Prostate gland (tissue), 2 donors: ENCODE measurements at regions of chr4 and their contacts with region 1.

Region 1: GRCh38 chr4:70504733-70505132 is 13.6 kb upstream of the AMTN start:
- DNase-seq: no peak
- H3K4me3 ChIP-seq: no peak overlapping the region
- H3K27ac ChIP-seq: no peak overlapping the region
- H3K4me1 ChIP-seq: no peaks in the 10 kb centered on the region
- H3K27me3 ChIP-seq: no peaks in the 10 kb centered on the region
- CTCF ChIP-seq: no peak
- POLR2A ChIP-seq: no peak

Region 2: DNA sequence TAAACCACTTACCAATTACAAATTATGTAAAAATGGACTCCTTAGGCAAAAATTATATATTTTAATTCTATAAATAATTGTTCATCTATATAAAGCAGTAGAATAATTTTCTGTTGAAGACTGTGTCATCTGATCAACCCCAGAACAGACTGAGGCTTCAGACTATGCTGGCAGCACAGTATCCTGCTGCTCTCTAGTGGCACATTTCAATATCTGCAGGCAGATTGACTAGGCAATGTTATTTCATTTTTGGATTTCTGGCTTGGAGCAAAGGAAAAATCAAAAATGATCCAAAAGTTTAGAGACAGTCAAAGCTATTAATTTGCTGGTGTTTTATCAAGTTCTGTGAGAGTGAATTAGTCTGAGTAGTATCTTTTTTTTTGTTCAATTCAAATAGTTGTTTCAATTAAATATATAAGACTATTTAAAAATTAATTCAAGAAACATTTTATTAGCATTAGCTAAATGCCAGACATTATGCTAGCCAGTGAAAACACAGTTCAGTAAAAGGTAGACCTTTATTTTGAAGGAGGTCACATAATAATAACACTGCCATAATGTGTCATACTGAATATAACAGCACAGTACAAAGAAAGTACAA is 623.5 kb before region 1 on chr4:
- intact Hi-C with region 1: loop called (anchors 5 kb)
- DNase-seq: peak; percentile 23
- H3K4me3 ChIP-seq: no peak overlapping the region
- H3K27ac ChIP-seq: no peak overlapping the region
- H3K4me1 ChIP-seq: no peaks in the 10 kb centered on the region
- H3K27me3 ChIP-seq: no peaks in the 10 kb centered on the region
- CTCF ChIP-seq: peak; percentile 48 to 88 (median 78)
- POLR2A ChIP-seq: no peak